ENCODE measurements at regions of chr11 and their contacts with region 1.

Region 1: DNA sequence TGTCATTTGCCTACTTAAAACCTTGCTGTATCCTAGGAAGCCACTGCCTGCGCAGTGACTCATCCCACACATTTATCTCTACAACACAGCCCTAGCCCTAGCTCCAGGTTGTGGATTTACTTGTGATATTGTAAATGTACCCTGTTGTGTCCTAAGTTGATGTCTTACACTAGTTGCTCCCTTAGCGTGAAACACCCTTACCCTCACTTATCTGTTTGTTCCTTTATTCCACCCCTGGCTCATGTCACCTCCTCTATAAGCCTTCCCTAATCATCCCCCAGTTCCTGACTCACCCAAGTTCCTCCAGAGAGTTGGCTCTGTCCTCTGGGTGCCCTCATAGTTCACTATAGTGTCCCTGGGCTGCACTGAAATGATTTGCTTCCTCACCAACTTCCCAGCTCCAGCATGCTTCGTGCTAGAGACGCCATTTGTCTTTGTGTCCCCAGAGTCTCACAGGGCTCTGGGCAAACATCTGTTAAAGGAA is 431.8 kb upstream of the FAT3 start:
- DNase-seq: peak; percentile 16 to 86 (median 46)
- ATAC-seq: peak; percentile 89
- H3K4me3 ChIP-seq: no peak overlapping the region
- H3K27ac ChIP-seq: peak overlapping the region; percentile 78
- H3K4me1 ChIP-seq: peaks cover 0 to 37% of the 10 kb centered on the region in 2 experiments; a peak in 3 of 5 replicates
- H3K27me3 ChIP-seq: no peaks in the 10 kb centered on the region
- CTCF ChIP-seq: peak in 1 of 3 experiments; percentile 6; a peak in 1 of 6 replicates
- EP300 ChIP-seq: peak; percentile 89
- POLR2A ChIP-seq: 0 out of 2 replicates have a peak, but pooled peaks have one; percentile 30
- RAD21 ChIP-seq: peak; percentile 39 to 57

Region 2: GRCh38 chr11:91608677-91609076 is 184.1 kb before region 1 on chr11:
- CTCF ChIA-PET with region 1: no interaction called
- POLR2A ChIA-PET with region 1: no interaction called
- in situ Hi-C with region 1: no loop called
- intact Hi-C with region 1: no loop called
- DNase-seq: no peak
- ATAC-seq: no peak
- H3K4me3 ChIP-seq: no peak overlapping the region
- H3K27ac ChIP-seq: no peak overlapping the region
- H3K4me1 ChIP-seq: no peaks in the 10 kb centered on the region
- H3K27me3 ChIP-seq: no peaks in the 10 kb centered on the region
- CTCF ChIP-seq: no peak
- EP300 ChIP-seq: no peak
- POLR2A ChIP-seq: no peak
- RAD21 ChIP-seq: no peak

Region 3: DNA sequence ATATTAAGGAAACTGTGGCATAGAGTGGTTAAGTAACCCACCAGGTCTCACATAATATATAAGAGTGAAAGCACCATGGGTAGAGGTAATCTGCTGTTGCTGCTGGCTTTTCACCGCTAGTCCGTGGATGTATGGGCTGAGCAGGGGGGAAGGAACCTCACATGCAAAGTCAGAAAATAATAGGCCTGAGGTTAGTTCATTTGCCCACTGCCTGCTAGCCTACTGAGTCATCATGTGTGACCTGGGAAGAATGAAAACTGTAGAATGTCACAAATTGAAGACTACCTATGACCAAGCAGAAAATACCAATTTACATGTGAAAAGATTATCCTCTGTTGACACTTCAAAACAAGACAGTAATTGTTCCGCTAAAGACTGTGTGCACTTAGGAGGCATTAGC is 128.3 kb before region 1 on chr11:
- CTCF ChIA-PET with region 1: no interaction called
- POLR2A ChIA-PET with region 1: no interaction called
- in situ Hi-C with region 1: no loop called
- intact Hi-C with region 1: no loop called
- DNase-seq: no peak
- ATAC-seq: no peak
- H3K4me3 ChIP-seq: no peak overlapping the region
- H3K27ac ChIP-seq: no peak overlapping the region
- H3K4me1 ChIP-seq: no peaks in the 10 kb centered on the region
- H3K27me3 ChIP-seq: no peaks in the 10 kb centered on the region
- CTCF ChIP-seq: no peak
- EP300 ChIP-seq: no peak
- POLR2A ChIP-seq: no peak
- RAD21 ChIP-seq: no peak

Region 4: DNA sequence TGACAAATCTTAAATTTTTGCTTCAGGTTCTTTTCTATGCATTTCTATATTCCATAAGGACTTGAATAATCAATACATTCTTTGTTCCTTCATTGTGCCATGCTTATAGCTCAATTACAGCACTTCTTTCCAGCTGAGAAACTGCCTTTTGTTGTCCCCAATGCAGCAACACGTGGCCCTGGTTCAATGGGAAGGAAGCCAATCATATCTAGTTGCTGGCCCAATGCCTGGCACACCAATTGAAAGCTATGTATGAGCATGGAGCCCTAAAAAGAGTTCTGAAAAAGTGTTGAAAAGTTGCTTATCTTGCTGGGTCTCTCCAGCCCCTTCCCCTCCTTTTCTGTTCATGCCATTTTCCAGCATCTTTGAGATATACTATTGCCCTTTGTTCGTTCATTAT is 16.2 kb before region 1 on chr11:
- CTCF ChIA-PET with region 1: no interaction called
- POLR2A ChIA-PET with region 1: no interaction called
- in situ Hi-C with region 1: no loop called
- intact Hi-C with region 1: no loop called
- DNase-seq: no peak
- ATAC-seq: no peak
- H3K4me3 ChIP-seq: no peak overlapping the region
- H3K27ac ChIP-seq: no peak overlapping the region
- H3K4me1 ChIP-seq: no peaks in the 10 kb centered on the region
- H3K27me3 ChIP-seq: no peaks in the 10 kb centered on the region
- CTCF ChIP-seq: no peak
- EP300 ChIP-seq: no peak
- POLR2A ChIP-seq: no peak
- RAD21 ChIP-seq: no peak

Region 5: GRCh38 chr11:91904792-91905785 is 112.3 kb after region 1 on chr11:
- CTCF ChIA-PET with region 1: no interaction called
- POLR2A ChIA-PET with region 1: no interaction called
- in situ Hi-C with region 1: no loop called
- intact Hi-C with region 1: loop called (anchors 2 kb)
- DNase-seq: peak; percentile 8 to 54 (median 19)
- ATAC-seq: peak; percentile 90
- H3K4me3 ChIP-seq: no peak overlapping the region
- H3K27ac ChIP-seq: peak overlapping the region; percentile 80
- H3K4me1 ChIP-seq: peaks cover 0 to 24% of the 10 kb centered on the region in 2 experiments; a peak in 3 of 5 replicates
- H3K27me3 ChIP-seq: no peaks in the 10 kb centered on the region
- CTCF ChIP-seq: no peak
- EP300 ChIP-seq: peak; percentile 99
- POLR2A ChIP-seq: no peak
- RAD21 ChIP-seq: peak; percentile 38 to 51; a peak in 3 of 4 replicates